Activated B cell treated with CpG ODN at 0.5 μM for 24 hours (primary cell): ENCODE measurements at regions of chr6 and their contacts with region 1.

Region 1: GRCh38 chr6:131909408-131910218 is 41.6 kb downstream of the CCN2 start:
- DNase-seq: peak; percentile 36
- ATAC-seq: peak; percentile 96
- H3K4me3 Mint-ChIP-seq: no peak overlapping the region
- H3K27ac Mint-ChIP-seq: no peak overlapping the region
- H3K4me1 Mint-ChIP-seq: peaks cover 7% of the 10 kb centered on the region
- H3K27me3 Mint-ChIP-seq: peaks cover 23% of the 10 kb centered on the region
- CTCF ChIP-seq: peak; percentile 95

Region 2: GRCh38 chr6:131199568-131200272 is 709.9 kb before region 1 on chr6:
- CTCF ChIA-PET with region 1: interaction called, 4 read pairs
- POLR2A ChIA-PET with region 1: no interaction called
- intact Hi-C with region 1: loop called (anchors 5 kb)
- DNase-seq: peak; percentile 44
- ATAC-seq: peak; percentile 100
- H3K4me3 Mint-ChIP-seq: peak overlapping the region; percentile 72
- H3K27ac Mint-ChIP-seq: peak overlapping the region; percentile 87
- H3K4me1 Mint-ChIP-seq: peaks cover 36% of the 10 kb centered on the region
- H3K27me3 Mint-ChIP-seq: no peaks in the 10 kb centered on the region
- CTCF ChIP-seq: peak; percentile 16

Region 3: DNA sequence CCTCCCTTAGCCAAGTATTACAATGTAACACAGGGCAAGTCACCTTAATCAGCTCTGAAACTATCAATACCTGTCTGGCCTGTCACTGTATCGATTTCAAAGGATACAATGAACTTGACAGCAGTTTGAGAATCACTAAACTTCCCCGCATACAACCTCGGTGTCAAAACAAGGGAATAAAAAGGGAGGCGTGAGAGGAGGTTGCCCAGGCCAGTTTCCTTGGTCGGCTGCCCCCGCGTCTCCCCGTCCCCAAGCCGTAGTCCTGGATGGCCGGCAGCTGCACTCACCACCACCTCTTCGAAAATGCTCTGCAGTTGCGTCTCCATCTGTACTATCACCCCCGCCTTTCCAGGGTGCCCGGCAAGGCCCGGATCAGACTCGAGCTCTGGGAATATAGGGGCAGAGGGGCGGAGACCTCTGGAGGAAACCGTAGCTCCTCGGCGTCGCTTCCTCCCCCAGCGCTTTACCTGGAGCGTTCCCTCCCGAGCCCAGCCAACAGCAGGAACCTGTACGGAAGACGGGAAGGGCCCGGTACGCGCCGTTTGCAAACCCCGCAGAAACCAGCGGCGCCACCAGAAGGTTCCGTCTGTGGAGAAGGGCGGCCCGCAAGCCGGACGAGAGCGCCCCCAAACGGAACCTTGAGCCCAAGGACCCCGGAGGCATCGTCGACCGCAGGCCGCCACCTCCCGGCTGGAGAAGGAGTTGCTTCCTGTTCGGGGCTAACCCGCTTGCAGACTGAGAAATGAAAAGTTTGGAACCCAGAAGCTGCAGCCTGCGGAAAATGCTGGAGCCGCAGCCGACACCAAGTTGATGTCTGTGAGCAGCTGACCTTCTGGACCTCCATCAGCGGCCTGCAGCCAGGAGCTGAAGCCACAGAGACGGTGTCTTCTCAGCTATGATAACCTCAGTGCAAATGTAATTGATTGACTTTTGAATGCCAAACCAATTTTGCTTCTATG is 281.6 kb before region 1 on chr6 and contains the start of gene MED23:
- CTCF ChIA-PET with region 1: interaction called, 11 read pairs
- POLR2A ChIA-PET with region 1: no interaction called
- intact Hi-C with region 1: loop called (anchors 5 kb)
- DNase-seq: peak; percentile 98
- ATAC-seq: peak; percentile 95
- H3K4me3 Mint-ChIP-seq: peak within 1 kb of the TSS; percentile 99
- H3K27ac Mint-ChIP-seq: peak within 1 kb of the TSS; percentile 94
- H3K4me1 Mint-ChIP-seq: peaks cover 31% of the 10 kb centered on the region
- H3K27me3 Mint-ChIP-seq: no peaks in the 10 kb centered on the region
- CTCF ChIP-seq: peak; percentile 62
- total RNA-seq, gene MED23: 45.3 and 51.0 TPM in 2 replicates

Region 4: GRCh38 chr6:131782764-131783163 is 126.8 kb before region 1 on chr6:
- CTCF ChIA-PET with region 1: interaction called, 7 read pairs
- POLR2A ChIA-PET with region 1: no interaction called
- intact Hi-C with region 1: loop called (anchors 1 kb)
- DNase-seq: no peak
- ATAC-seq: no peak
- H3K4me3 Mint-ChIP-seq: no peak overlapping the region
- H3K27ac Mint-ChIP-seq: no peak overlapping the region
- H3K4me1 Mint-ChIP-seq: no peaks in the 10 kb centered on the region
- H3K27me3 Mint-ChIP-seq: peaks cover 6% of the 10 kb centered on the region
- CTCF ChIP-seq: no peak

Region 5: GRCh38 chr6:132391391-132392271 is 482.0 kb after region 1 on chr6:
- CTCF ChIA-PET with region 1: no interaction called
- POLR2A ChIA-PET with region 1: no interaction called
- intact Hi-C with region 1: loop called (anchors 10 kb)
- DNase-seq: no peak
- ATAC-seq: no peak
- H3K4me3 Mint-ChIP-seq: no peak overlapping the region
- H3K27ac Mint-ChIP-seq: no peak overlapping the region
- H3K4me1 Mint-ChIP-seq: peaks cover 29% of the 10 kb centered on the region
- H3K27me3 Mint-ChIP-seq: peaks cover 4% of the 10 kb centered on the region
- CTCF ChIP-seq: no peak

Region 6: GRCh38 chr6:133241086-133241900 is 1331.7 kb after region 1 on chr6 and contains the start of gene EYA4:
- CTCF ChIA-PET with region 1: no interaction called
- POLR2A ChIA-PET with region 1: no interaction called
- intact Hi-C with region 1: no loop called
- DNase-seq: no peak
- ATAC-seq: no peak
- H3K4me3 Mint-ChIP-seq: peak within 1 kb of the TSS; percentile 46
- H3K27ac Mint-ChIP-seq: no peak within 1 kb of the TSS
- H3K4me1 Mint-ChIP-seq: peaks cover 23% of the 10 kb centered on the region
- H3K27me3 Mint-ChIP-seq: peaks cover 43% of the 10 kb centered on the region
- CTCF ChIP-seq: no peak
- total RNA-seq, gene EYA4: 0.05 and 0.40 TPM in 2 replicates